ENCODE measurements at regions of chr1 and their contacts with region 1.

Region 1: DNA sequence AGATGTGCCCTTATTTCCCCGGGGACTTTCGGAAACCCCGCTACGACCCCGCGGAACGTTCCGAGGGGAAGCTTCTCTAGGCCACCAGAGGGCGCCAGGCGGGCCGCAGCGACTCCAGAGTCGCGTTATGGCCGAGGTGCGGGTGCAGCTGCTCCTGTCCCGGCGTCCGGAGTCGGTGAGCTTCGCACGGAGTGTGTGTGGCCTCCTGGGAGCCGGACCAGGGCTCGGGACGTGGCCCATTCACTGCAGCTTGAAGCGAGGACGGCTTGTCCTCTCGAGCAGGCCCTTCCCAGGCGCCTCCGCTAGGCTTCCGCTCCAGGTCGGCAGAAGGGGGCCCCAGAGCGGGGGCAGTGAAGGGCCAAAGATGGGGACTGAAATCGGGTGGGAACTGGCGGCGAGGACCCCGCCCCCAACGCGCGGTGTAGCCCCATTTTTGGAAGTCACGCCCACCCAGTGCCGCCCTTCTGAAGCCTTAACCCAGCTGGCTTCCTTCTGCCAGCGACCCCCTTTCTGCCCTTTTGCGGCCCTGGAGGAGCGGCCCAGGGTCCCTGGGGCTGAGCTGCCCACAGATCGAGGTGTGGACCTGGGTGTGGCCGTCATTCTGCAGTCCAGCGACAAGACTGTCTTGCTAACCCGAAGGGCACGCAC is at the start of gene NUDT17:
- DNase-seq: peak; percentile 85
- ATAC-seq: peak; percentile 71
- H3K4me3 Mint-ChIP-seq: no peak within 1 kb of the TSS
- H3K27ac Mint-ChIP-seq: no peak within 1 kb of the TSS
- H3K4me1 Mint-ChIP-seq: peaks cover 13% of the 10 kb centered on the region
- H3K27me3 Mint-ChIP-seq: no peaks in the 10 kb centered on the region
- CTCF ChIP-seq: peak; percentile 87
- total RNA-seq, gene NUDT17: 3.0 to 3.3 TPM

Region 2: DNA sequence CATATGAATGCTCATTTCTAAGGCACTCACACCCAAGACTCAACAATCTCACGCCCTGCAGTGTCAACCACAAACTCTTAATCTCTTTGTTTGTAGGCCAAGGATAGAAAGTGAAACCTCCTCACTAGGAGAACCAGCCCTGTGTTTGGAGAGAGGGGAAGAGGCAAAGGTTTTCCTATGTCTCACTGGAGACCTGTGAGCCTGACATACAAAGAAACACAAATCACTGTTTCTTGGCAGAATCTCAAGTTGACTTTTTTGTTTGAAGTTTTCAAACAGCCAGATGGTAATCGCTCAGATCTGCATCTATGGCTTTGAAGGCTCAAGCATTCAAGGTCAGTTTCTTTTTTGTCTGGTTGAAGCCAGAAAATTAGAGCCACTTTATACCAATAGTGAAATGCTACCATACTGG is 155.0 kb before region 1 on chr1:
- CTCF ChIA-PET with region 1: no interaction called
- POLR2A ChIA-PET with region 1: no interaction called
- intact Hi-C with region 1: no loop called
- DNase-seq: peak; percentile 66
- ATAC-seq: peak; percentile 95
- H3K4me3 Mint-ChIP-seq: no peak overlapping the region
- H3K27ac Mint-ChIP-seq: peak overlapping the region; percentile 68
- H3K4me1 Mint-ChIP-seq: peaks cover 27% of the 10 kb centered on the region
- H3K27me3 Mint-ChIP-seq: no peaks in the 10 kb centered on the region
- CTCF ChIP-seq: no peak

Region 3: GRCh38 chr1:145730900-145731299 is 114.7 kb before region 1 on chr1:
- CTCF ChIA-PET with region 1: interaction called, 3 read pairs
- POLR2A ChIA-PET with region 1: no interaction called
- intact Hi-C with region 1: loop called (anchors 5 kb)
- DNase-seq: no peak
- ATAC-seq: no peak
- H3K4me3 Mint-ChIP-seq: no peak overlapping the region
- H3K27ac Mint-ChIP-seq: no peak overlapping the region
- H3K4me1 Mint-ChIP-seq: peaks cover 10% of the 10 kb centered on the region
- H3K27me3 Mint-ChIP-seq: no peaks in the 10 kb centered on the region
- CTCF ChIP-seq: no peak

Region 4: DNA sequence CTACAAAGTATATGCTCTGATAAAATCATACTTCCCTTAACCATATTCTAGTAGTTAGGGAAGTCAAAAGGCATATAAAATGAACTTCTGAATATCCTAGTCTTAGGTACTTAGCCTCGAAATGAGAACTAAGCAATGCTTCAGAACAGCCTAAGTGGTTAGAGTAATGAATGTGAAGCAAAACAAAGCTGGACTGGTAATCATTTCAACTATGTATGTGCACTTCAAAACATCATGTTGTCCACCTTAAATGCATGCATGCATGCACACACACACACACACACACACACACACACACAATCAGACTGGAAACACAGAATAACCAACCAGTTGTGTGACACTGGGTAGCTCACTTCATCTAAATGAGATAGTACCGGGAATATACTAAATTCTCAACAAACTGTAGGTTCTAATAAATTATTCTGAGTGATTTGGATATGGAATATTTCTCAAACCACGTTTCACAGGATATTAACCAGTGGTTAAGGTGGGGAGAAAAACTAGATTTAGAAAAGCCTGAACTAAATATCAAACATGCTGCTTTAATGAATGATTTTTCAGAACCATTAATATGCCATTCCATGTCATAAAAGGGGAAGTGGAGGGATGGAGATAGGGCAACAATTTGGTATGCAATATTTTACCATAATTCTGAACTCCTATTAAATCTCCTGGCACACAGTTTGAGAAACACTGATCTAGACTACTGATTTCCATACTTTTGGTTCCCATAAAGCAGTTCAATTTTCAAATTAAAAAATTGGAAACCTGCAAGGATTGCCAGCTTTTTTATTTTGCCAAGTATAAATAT is 41.2 kb before region 1 on chr1:
- CTCF ChIA-PET with region 1: interaction called, 19 read pairs
- POLR2A ChIA-PET with region 1: no interaction called
- intact Hi-C with region 1: no loop called
- DNase-seq: no peak
- ATAC-seq: no peak
- H3K4me3 Mint-ChIP-seq: no peak overlapping the region
- H3K27ac Mint-ChIP-seq: no peak overlapping the region
- H3K4me1 Mint-ChIP-seq: peaks cover 49% of the 10 kb centered on the region
- H3K27me3 Mint-ChIP-seq: no peaks in the 10 kb centered on the region
- CTCF ChIP-seq: no peak

Region 5: DNA sequence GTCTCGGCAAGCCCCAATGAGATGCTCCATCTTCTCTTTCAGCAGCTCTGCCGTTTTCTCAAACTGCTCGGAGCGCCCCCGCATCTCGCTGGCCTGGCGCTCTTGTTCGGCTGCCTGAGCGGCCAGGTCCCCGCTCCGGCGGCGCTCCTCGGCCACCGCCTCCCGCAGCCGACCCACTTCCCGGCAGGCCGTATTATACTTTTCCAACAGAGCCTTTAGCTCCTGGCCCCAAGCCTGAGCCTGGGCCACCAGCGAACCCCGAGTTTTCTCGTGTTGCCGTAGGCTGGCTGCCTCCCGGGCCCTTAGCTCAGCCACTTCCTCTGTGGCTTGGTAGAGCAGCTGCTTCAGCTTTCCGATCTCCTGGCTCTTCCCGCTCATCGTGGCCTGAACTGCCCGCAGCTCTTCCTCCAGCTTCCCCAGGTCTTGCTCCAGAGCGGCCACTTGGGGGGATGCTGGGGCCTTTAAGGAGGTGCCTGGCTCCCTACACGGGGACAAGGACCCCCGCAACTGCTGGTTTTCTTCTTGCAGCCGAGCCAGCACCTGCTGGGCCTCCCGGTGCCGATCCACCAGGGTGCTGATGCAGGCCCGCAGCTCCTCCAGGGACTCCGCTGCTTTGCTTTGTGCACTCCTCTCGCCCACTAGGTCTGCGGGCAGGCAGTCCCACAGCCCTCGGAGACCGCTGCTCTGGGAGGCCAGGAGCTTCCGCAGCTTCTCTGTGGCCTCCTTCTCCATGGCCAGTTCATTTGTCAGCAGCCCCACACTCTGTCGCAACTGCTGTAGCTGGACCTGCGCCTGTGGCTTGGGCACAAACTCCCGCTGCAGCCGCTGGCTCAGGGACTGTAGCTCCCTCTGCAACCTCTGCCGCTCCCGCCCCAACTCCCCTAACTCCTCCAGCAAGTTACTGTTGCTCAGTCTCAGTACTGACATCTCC is 26.6 kb after region 1 on chr1:
- CTCF ChIA-PET with region 1: interaction called, 43 read pairs
- POLR2A ChIA-PET with region 1: interaction called, 6 read pairs
- intact Hi-C with region 1: no loop called
- DNase-seq: peak; percentile 47
- ATAC-seq: peak; percentile 81
- H3K4me3 Mint-ChIP-seq: peak overlapping the region; percentile 75
- H3K27ac Mint-ChIP-seq: peak overlapping the region; percentile 27
- H3K4me1 Mint-ChIP-seq: peaks cover 13% of the 10 kb centered on the region
- H3K27me3 Mint-ChIP-seq: peaks cover 8% of the 10 kb centered on the region
- CTCF ChIP-seq: no peak

Region 6: GRCh38 chr1:145906954-145907753 is 61.5 kb after region 1 on chr1:
- CTCF ChIA-PET with region 1: interaction called, 108 read pairs
- POLR2A ChIA-PET with region 1: interaction called, 4 read pairs
- intact Hi-C with region 1: loop called (anchors 10 kb)
- DNase-seq: no peak
- ATAC-seq: no peak
- H3K4me3 Mint-ChIP-seq: no peak overlapping the region
- H3K27ac Mint-ChIP-seq: no peak overlapping the region
- H3K4me1 Mint-ChIP-seq: peaks cover 5% of the 10 kb centered on the region
- H3K27me3 Mint-ChIP-seq: no peaks in the 10 kb centered on the region
- CTCF ChIP-seq: no peak

Region 7: DNA sequence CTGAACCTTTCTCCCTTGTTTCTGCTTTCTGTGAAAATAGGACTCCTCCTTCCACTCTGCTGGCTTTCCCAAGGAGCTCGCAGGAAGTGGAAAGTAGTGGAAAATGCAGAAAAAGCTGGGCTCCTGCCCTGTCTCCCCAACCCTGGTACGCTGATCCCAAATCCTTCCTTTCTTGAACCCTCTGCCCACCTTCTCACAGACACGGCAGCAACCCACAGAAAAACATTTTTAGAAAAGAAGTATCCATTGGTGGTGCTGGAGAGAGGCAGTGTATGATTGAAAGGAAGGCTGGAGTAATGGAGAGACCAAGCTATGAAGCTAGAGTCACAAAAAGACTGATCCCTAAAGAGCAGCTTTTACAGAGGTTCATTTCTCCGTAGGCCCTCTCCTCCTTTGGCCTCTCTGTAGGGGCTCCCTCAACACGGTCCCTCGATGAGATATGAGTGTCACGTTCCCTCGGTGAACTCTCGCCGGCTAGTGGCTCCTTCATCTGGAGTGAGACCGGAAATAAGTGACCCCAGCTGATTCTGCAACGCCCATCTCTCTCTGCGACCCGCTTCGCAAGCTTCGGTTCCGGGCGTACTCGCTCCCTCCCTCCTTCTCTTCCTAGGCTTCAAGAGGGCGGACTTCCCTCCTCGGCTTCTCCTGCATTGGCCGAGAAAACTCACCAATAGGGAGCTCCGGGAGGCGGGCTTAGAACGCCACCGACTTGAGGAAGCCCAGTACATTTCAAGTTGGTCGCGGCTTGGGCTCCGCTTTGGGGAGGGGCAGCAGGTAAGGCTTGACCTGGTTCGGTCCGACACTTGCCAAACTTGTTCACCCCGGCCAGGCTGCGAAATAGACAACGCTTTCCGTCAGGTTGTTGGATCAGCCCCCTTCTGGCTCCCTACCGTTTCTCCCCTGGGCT is 118.6 kb after region 1 on chr1 and contains the starts of genes ANKRD34A and POLR3GL:
- CTCF ChIA-PET with region 1: interaction called, 11 read pairs
- POLR2A ChIA-PET with region 1: interaction called, 3 read pairs
- intact Hi-C with region 1: no loop called
- DNase-seq: peak; percentile 98
- ATAC-seq: peak; percentile 88
- H3K4me3 Mint-ChIP-seq: peak within 1 kb of the TSS; percentile 92
- H3K27ac Mint-ChIP-seq: peak within 1 kb of the TSS; percentile 91
- H3K4me1 Mint-ChIP-seq: peaks cover 30% of the 10 kb centered on the region
- H3K27me3 Mint-ChIP-seq: no peaks in the 10 kb centered on the region
- CTCF ChIP-seq: no peak
- total RNA-seq, gene ANKRD34A: 6.6 to 7.7 TPM
- total RNA-seq, gene POLR3GL: 22.3 to 23.3 TPM